Heart left ventricle (tissue), 16 donors: ENCODE measurements at regions of chr5 and their contacts with region 1.

Region 1: GRCh38 chr5:146124580-146124979 is 19.2 kb upstream of the PLAC8L1 start:
- DNase-seq: no peak
- ATAC-seq: no peak
- H3K4me3 ChIP-seq: no peak overlapping the region
- H3K27ac ChIP-seq: no peak overlapping the region
- H3K4me1 ChIP-seq: no peaks in the 10 kb centered on the region
- H3K27me3 ChIP-seq: no peaks in the 10 kb centered on the region
- CTCF ChIP-seq: no peak
- POLR2A ChIP-seq: no peak

Region 2: GRCh38 chr5:145825751-145826180 is 298.8 kb before region 1 on chr5:
- intact Hi-C with region 1: loop called in 3 of 10 experiments (anchors 10 kb)
- DNase-seq: no peak
- ATAC-seq: peak in 1 of 4 donors; percentile 50
- H3K4me3 ChIP-seq: no peak overlapping the region
- H3K27ac ChIP-seq: no peak overlapping the region
- H3K4me1 ChIP-seq: peaks cover 0 to 8% (median 5%) of the 10 kb centered on the region in 12 donors
- H3K27me3 ChIP-seq: no peaks in the 10 kb centered on the region
- CTCF ChIP-seq: peak; percentile 53 to 87 (median 69)
- POLR2A ChIP-seq: no peak

Region 3: GRCh38 chr5:145834917-145835847 is 289.4 kb before region 1 on chr5 and contains the start of gene PRELID2:
- intact Hi-C with region 1: loop called in 2 of 10 experiments (anchors 10 kb)
- DNase-seq: peak; percentile 89 to 93 (median 91)
- ATAC-seq: peak; percentile 88 to 97 (median 95)
- H3K4me3 ChIP-seq: peak within 1 kb of the TSS; percentile 65 to 85 (median 76)
- H3K27ac ChIP-seq: peak within 1 kb of the TSS; percentile 40 to 82 (median 69)
- H3K4me1 ChIP-seq: peaks cover 0 to 26% (median 13%) of the 10 kb centered on the region in 12 donors
- H3K27me3 ChIP-seq: no peaks in the 10 kb centered on the region
- CTCF ChIP-seq: peak in 3 of 12 donors; percentile 12 to 32 (median 28)
- POLR2A ChIP-seq: peak in 1 of 2 donors; percentile 75
- total RNA-seq, gene PRELID2: 6.5 to 26.7 (median 10.6) TPM

Region 4: GRCh38 chr5:145946112-145946861 is 178.3 kb before region 1 on chr5:
- intact Hi-C with region 1: loop called in 1 of 10 experiments (anchors 10 kb)
- DNase-seq: peak in 3 of 5 donors; percentile 24 to 51 (median 37)
- ATAC-seq: peak; percentile 85 to 93 (median 92)
- H3K4me3 ChIP-seq: no peak overlapping the region
- H3K27ac ChIP-seq: peak overlapping the region in 11 of 12 donors; percentile 11 to 69 (median 66)
- H3K4me1 ChIP-seq: peaks cover 0 to 53% (median 10%) of the 10 kb centered on the region in 12 donors
- H3K27me3 ChIP-seq: no peaks in the 10 kb centered on the region
- CTCF ChIP-seq: no peak
- POLR2A ChIP-seq: no peak